Left ventricle myocardium inferior (tissue), 1 donor: ENCODE measurements at regions of chr9 and their contacts with region 1.

Region 1: GRCh38 chr9:69190086-69190862 is 16.2 kb downstream of the TJP2 start:
- DNase-seq: no peak
- H3K4me3 ChIP-seq: no peak overlapping the region
- H3K27ac ChIP-seq: peak overlapping the region; percentile 64
- H3K4me1 ChIP-seq: peaks cover 92% of the 10 kb centered on the region
- H3K27me3 ChIP-seq: no peaks in the 10 kb centered on the region
- CTCF ChIP-seq: no peak

Region 2: GRCh38 chr9:69056191-69056815 is 134.0 kb before region 1 on chr9:
- intact Hi-C with region 1: loop called (anchors 5 kb)
- DNase-seq: no peak
- H3K4me3 ChIP-seq: no peak overlapping the region
- H3K27ac ChIP-seq: no peak overlapping the region
- H3K4me1 ChIP-seq: peaks cover 14% of the 10 kb centered on the region
- H3K27me3 ChIP-seq: no peaks in the 10 kb centered on the region
- CTCF ChIP-seq: no peak